ENCODE measurements at regions of chr15 and their contacts with region 1.

Region 1: DNA sequence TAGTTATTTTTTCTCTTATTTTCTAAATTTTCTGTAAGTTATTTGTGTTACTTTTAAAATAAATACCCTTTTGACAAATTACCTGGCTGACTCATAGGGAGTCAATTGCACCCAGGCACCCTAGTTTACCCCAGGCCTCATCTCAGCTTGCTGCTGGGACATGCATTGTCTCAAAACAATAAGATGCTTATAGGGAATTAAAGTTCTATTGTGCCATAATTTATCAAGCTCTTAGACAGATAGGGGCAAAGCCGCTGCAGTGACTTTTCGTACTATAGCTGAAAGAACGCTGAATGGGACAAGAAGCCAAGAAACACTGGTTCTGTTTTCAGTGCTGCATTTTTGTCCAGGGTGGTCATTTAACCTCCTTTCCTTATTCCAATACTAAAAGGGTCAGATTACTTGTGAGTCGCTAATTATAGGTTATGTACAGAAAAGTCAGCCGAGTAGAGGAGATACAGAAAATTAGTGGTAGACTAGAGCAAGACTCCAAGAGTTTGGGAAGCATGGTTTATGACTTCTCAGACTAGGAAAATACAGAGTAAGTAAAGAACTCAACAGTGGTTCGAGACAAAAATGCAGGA is 50.3 kb downstream of the EXD1 start:
- DNase-seq: no peak
- H3K4me3 ChIP-seq: no peak overlapping the region
- H3K27ac ChIP-seq: no peak overlapping the region
- H3K4me1 ChIP-seq: no peaks in the 10 kb centered on the region
- H3K27me3 ChIP-seq: no peaks in the 10 kb centered on the region
- CTCF ChIP-seq: no peak

Region 2: DNA sequence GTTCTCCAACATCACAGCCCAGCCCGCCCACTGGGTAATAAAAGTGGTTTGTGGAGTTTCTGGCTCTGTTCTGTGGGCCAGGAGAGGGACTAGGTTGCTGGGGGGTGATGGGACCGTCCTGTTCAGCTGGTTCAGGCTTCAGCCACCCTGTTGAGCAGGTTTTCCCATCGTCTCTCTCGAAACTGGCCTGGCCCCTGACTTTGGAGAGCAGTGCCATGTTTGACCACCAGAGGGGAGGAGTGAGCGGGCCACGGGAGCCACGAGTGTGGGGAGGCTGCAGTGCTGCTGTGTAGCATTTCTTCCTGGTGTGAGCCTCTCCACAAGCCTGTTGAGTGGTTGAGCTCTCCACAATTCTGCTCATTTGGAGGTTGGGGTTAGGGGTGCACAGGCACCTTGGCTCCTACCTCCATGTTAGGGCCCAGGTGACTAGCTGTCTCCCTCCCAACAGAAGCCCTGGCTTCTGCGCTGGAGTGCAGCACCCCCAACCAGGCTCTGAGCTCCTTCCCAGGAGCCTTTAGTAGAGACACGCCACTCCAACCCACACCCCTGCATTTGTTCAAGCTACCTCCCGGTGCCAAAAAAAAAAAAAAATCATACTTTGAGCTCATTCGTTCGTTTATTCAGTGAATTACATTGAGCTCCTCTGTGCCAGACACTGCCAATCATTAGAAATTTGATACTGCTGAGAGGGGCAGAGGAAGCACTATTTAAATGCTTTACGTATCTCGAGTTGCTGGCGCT is 322.5 kb before region 1 on chr15:
- intact Hi-C with region 1: loop called (anchors 1 kb)
- DNase-seq: peak in 1 of 2 donors; percentile 82
- H3K4me3 ChIP-seq: no peak overlapping the region
- H3K27ac ChIP-seq: no peak overlapping the region
- H3K4me1 ChIP-seq: no peaks in the 10 kb centered on the region
- H3K27me3 ChIP-seq: no peaks in the 10 kb centered on the region
- CTCF ChIP-seq: peak; percentile 88 to 91 (median 91)

Region 3: GRCh38 chr15:41061667-41062066 is 118.6 kb before region 1 on chr15:
- intact Hi-C with region 1: no loop called
- DNase-seq: no peak
- H3K4me3 ChIP-seq: no peak overlapping the region
- H3K27ac ChIP-seq: no peak overlapping the region
- H3K4me1 ChIP-seq: no peaks in the 10 kb centered on the region
- H3K27me3 ChIP-seq: no peaks in the 10 kb centered on the region
- CTCF ChIP-seq: no peak

Region 4: GRCh38 chr15:41169781-41170180 is 10.5 kb before region 1 on chr15:
- intact Hi-C with region 1: no loop called
- DNase-seq: no peak
- H3K4me3 ChIP-seq: no peak overlapping the region
- H3K27ac ChIP-seq: no peak overlapping the region
- H3K4me1 ChIP-seq: no peaks in the 10 kb centered on the region
- H3K27me3 ChIP-seq: no peaks in the 10 kb centered on the region
- CTCF ChIP-seq: no peak

Region 5: GRCh38 chr15:41276821-41277220 is 96.5 kb after region 1 on chr15:
- intact Hi-C with region 1: no loop called
- DNase-seq: no peak
- H3K4me3 ChIP-seq: no peak overlapping the region
- H3K27ac ChIP-seq: no peak overlapping the region
- H3K4me1 ChIP-seq: no peaks in the 10 kb centered on the region
- H3K27me3 ChIP-seq: no peaks in the 10 kb centered on the region
- CTCF ChIP-seq: no peak